Activated naive CD4-positive, alpha-beta T cell treated with anti-CD3 and anti-CD28 coated beads for 36 hours (primary cell): ENCODE measurements at regions of chr1 and their contacts with region 1.

Region 1: GRCh38 chr1:185595835-185596667 is 138.1 kb upstream of the HMCN1 start:
- DNase-seq: peak; percentile 65
- H3K4me3 Mint-ChIP-seq: no peak overlapping the region
- H3K27ac Mint-ChIP-seq: no peak overlapping the region
- H3K4me1 Mint-ChIP-seq: peaks cover 19% of the 10 kb centered on the region
- H3K27me3 Mint-ChIP-seq: no peaks in the 10 kb centered on the region

Region 2: GRCh38 chr1:185129708-185130107 is 466.3 kb before region 1 on chr1:
- CTCF ChIA-PET with region 1: no interaction called
- intact Hi-C with region 1: no loop called
- DNase-seq: no peak
- H3K4me3 Mint-ChIP-seq: no peak overlapping the region
- H3K27ac Mint-ChIP-seq: no peak overlapping the region
- H3K4me1 Mint-ChIP-seq: no peaks in the 10 kb centered on the region
- H3K27me3 Mint-ChIP-seq: no peaks in the 10 kb centered on the region

Region 3: GRCh38 chr1:185585770-185586169 is 10.3 kb before region 1 on chr1:
- CTCF ChIA-PET with region 1: interaction called, 11 read pairs
- intact Hi-C with region 1: no loop called
- DNase-seq: no peak
- H3K4me3 Mint-ChIP-seq: no peak overlapping the region
- H3K27ac Mint-ChIP-seq: no peak overlapping the region
- H3K4me1 Mint-ChIP-seq: no peaks in the 10 kb centered on the region
- H3K27me3 Mint-ChIP-seq: no peaks in the 10 kb centered on the region

Region 4: GRCh38 chr1:186363891-186364290 is 767.8 kb after region 1 on chr1:
- CTCF ChIA-PET with region 1: no interaction called
- intact Hi-C with region 1: no loop called
- DNase-seq: no peak
- H3K4me3 Mint-ChIP-seq: no peak overlapping the region
- H3K27ac Mint-ChIP-seq: no peak overlapping the region
- H3K4me1 Mint-ChIP-seq: peaks cover 2% of the 10 kb centered on the region
- H3K27me3 Mint-ChIP-seq: no peaks in the 10 kb centered on the region